ENCODE measurements at regions of chr10 and their contacts with region 1.

Region 1: GRCh38 chr10:75572478-75572877 is 141.1 kb downstream of the LRMDA start:
- DNase-seq: no peak
- ATAC-seq: no peak

Region 2: GRCh38 chr10:75593692-75594556 is 21.4 kb after region 1 on chr10:
- intact Hi-C with region 1: loop called (anchors 2 kb)
- DNase-seq: no peak
- ATAC-seq: no peak

Measured in left ventricle myocardium superior (tissue), 1 donor.